Esophagus muscularis mucosa (tissue), 4 donors: ENCODE measurements at regions of chr7 and their contacts with region 1.

Region 1: DNA sequence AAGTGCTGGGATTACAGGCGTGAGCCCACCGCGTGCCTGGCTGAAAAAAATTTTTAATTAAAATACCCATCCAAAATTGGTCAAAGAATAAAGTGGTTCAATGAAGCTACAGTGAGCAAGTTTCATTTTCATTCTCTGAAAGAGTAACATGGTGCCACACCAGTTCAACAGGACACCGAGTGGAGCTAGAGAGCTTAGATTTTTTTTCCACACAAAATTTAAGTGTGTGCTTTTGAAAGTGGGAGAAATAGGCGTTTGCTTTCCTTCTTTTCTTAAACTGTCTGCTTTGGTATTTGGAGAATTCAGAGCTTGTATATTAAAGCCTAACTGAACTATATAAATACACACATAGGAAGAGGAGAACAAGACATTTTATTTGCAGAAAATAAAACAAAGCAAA is 43.4 kb downstream of the BPGM start:
- DNase-seq: no peak
- H3K4me3 ChIP-seq: peak overlapping the region; percentile 32 to 49 (median 42)
- H3K27ac ChIP-seq: peak overlapping the region; percentile 78 to 84 (median 82)
- H3K4me1 ChIP-seq: peaks cover 14 to 73% (median 51%) of the 10 kb centered on the region in 4 donors
- H3K27me3 ChIP-seq: no peaks in the 10 kb centered on the region
- CTCF ChIP-seq: peak; percentile 67 to 77 (median 72)
- EP300 ChIP-seq: no peak
- POLR2A ChIP-seq: no peak

Region 2: DNA sequence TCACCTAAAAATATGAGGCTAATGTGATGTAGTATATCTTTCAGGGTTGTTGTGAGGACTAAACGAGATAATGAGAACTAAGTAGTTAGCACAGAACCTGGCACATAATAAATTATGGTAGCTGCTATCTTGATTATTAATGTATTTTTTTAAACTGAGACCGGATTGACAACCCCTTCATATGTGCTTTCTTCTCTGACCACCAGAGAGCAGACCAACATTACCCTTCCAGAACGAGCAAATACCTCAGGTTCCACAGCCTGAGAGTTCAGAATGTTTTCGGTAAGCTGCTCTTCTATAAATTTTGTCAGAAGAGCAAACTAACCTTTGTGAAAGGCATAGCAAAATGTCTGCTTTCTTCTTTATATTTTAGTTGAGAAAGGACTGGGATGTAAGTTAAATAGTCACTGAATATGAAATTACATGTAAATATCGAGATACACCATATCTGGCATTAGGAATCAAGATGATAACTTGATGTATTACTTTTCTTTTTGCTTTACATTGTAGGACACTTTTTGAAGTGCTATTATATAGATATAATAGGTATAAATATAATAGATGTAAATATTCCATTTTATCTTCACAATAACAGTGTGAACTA is 57.0 kb before region 1 on chr7:
- intact Hi-C with region 1: no loop called
- DNase-seq: no peak
- H3K4me3 ChIP-seq: no peak overlapping the region
- H3K27ac ChIP-seq: no peak overlapping the region
- H3K4me1 ChIP-seq: peaks cover 0 to 3% (median 0%) of the 10 kb centered on the region in 4 donors
- H3K27me3 ChIP-seq: no peaks in the 10 kb centered on the region
- CTCF ChIP-seq: peak in 2 of 3 experiments; percentile 41 to 47
- EP300 ChIP-seq: no peak
- POLR2A ChIP-seq: no peak

Region 3: DNA sequence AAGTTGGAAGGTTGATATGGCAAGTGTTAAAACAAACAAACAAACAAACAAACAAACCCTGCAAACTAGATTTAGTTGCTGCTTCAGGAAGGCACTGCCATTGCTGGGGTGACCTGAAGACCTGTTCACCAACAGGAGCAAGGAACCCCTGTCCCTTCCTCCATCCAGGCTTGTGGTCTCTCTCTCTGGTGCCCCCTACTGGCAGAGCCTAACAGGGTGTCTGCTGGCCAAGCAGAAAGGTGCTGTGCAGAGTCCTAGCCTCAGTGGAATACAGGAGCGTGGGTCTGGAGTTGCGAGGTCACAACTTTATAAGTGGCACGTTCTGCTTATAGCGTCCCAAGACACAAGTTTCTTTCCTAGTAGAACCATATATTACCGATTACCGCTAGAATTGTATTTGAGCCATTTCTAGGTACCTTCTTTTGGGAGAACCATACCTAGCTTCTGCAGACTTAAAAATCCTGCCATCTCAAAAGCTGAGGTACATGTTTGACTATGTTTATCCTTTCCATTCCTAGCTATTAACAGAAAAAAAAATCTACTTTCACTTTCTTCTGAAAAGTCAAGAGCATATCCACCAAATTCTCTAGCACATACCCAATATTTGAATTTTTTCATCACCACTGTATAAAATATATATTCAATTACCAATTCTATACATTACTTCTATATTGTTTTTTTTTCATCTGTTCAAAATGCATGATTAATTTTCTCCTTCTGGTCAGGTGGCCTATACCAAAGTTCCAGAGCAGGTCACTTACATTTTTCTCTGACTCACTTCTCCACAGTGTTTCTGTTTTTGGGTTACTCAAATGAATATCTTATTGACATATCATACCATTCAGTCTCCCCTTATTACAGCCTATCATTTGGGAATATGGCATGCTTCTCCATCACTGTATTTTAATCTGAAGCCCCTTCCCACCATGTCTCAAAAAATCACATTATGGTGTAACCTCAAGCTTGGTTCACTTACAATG is 60.4 kb after region 1 on chr7:
- intact Hi-C with region 1: loop called (anchors 5 kb)
- DNase-seq: no peak
- H3K4me3 ChIP-seq: no peak overlapping the region
- H3K27ac ChIP-seq: no peak overlapping the region
- H3K4me1 ChIP-seq: peaks cover 2 to 48% (median 39%) of the 10 kb centered on the region in 4 donors
- H3K27me3 ChIP-seq: no peaks in the 10 kb centered on the region
- CTCF ChIP-seq: peak; percentile 49 to 66 (median 63)
- EP300 ChIP-seq: no peak
- POLR2A ChIP-seq: no peak

Region 4: DNA sequence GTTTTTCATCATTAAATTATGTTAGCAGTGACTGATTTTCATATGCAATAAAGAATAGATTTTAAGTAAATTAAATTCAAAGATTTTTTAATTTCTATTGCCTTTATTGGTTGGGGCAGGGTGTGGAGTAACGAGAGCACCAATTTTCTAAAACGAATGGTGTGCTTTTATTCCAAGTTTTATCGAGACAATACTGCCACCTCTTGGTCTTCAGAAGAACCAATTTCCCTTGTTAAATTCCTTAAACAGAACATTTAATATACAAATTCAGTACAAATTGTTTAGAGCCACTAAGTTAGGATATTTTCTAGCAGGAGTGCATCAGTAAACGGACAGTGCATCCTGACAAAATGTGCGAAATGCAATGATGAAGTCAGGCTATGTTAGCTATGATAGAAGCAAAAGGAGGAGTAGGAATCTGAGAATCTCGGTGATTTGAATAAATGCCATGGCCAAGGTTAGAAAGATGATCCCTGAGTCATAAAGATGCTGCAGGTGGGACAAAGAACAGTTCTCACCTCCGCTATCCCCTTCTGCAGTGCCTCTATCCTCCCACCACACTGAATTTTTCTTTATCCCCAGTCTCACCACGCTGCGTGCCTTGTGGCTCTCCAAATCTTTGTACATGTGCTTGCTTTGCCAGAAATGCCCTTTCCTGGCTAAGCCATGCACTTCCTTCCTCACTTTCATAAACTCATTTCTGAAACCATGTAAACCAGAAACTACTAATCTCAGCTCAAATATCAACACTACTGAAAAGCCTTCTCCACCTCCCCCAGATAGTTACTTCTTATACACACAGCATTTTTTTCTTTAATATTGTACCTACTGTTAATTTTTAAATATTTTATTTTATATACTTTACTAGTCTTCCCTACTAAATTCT is 264.4 kb after region 1 on chr7:
- intact Hi-C with region 1: loop called (anchors 2 kb)
- DNase-seq: no peak
- H3K4me3 ChIP-seq: no peak overlapping the region
- H3K27ac ChIP-seq: peak overlapping the region; percentile 35 to 89 (median 39)
- H3K4me1 ChIP-seq: peaks cover 0 to 30% (median 20%) of the 10 kb centered on the region in 4 donors
- H3K27me3 ChIP-seq: no peaks in the 10 kb centered on the region
- CTCF ChIP-seq: peak; percentile 52 to 57 (median 56)
- EP300 ChIP-seq: no peak
- POLR2A ChIP-seq: no peak

Region 5: DNA sequence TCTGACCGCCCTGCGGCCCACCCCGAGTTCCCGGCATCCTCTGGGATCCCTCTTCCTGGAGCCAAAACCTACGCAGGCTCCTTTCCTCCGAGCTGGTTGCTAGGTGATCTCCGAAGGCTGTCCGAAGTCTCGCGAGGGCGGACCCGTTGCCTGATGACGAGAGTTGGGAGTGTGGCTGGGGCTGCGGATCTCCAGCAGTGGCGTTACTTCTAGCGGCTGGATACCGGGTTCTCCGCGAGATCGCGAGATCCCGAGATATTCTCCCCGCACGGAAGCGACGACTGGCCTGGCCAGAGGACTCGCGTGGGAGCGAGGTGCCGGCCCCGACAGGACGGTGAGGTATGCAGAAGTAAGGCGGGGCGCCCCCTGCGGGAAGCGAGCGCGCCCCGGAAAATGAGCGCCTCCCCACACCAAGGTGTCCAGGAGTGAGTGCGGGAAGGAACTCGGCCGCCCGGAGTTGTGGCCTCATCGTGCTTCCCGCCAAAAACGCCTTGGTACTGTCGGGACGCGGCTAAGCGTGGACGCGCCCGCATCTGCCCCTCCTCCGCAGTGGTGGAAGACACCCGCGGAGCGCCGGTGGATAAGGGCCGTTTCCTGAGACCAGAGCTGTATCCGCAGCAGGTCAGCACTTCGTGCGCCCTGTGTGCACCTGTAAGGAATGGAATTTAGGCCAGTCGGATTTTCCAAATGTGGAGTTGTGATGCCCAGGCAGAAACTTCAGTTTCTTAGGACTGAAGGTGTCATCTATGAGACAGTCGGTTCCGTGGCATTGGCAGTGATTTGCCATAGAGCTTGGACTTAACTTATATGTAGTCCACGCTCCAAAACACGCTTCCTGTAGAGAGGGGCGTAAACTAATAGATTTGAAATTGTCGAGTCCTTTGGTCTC is 296.6 kb after region 1 on chr7 and contains the start of gene AGBL3:
- intact Hi-C with region 1: loop called (anchors 10 kb)
- DNase-seq: peak; percentile 99
- H3K4me3 ChIP-seq: peak within 1 kb of the TSS; percentile 70 to 81 (median 76)
- H3K27ac ChIP-seq: peak within 1 kb of the TSS; percentile 87 to 93 (median 88)
- H3K4me1 ChIP-seq: peaks cover 0 to 51% (median 33%) of the 10 kb centered on the region in 4 donors
- H3K27me3 ChIP-seq: no peaks in the 10 kb centered on the region
- CTCF ChIP-seq: peak; percentile 60 to 69 (median 62)
- EP300 ChIP-seq: peak; percentile 21
- POLR2A ChIP-seq: no peak
- total RNA-seq, gene AGBL3: 0.66 to 3.3 (median 1.7) TPM

Region 6: DNA sequence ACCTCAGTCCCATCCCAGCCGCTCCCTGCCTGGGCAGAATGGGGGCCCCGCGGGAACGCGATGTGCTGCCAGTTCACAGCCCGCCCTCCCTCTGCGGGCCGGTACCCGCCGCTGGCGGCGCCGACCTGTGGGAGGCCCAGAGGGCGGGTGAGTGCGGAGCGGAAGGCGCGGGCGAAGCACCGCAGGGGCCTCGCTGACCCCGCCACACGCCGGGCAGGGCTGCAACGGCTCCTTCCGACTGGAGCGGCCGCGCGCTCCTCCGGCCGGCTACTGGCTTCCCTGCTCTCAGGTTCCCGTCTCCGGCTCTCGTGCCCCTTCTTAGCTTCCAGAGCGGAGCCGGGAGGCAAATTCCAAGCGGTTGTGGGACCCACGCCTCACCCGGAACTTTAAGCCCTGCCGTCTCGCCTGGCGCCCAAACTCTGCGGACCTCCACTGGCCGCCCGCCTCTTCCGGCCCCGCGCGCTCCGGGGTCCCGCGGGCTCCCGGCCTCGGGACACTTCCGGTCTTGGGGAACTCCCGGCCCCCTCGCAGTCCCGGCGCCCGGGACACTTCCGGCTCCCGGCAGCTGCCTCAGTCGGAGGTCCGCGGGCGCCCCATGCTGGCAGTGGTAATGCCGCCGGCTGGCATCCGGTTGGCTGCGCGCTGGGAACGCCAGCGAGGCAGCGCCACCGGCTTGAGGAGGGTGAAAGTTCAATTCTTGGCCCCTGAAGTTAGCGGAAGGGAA is 480.4 kb after region 1 on chr7 and contains the start of gene CYREN:
- intact Hi-C with region 1: loop called (anchors 2 kb)
- DNase-seq: peak; percentile 96
- H3K4me3 ChIP-seq: peak within 1 kb of the TSS; percentile 82 to 88 (median 84)
- H3K27ac ChIP-seq: peak within 1 kb of the TSS; percentile 94 to 98 (median 96)
- H3K4me1 ChIP-seq: peaks cover 57 to 60% (median 60%) of the 10 kb centered on the region in 4 donors
- H3K27me3 ChIP-seq: peaks cover 0 to 4% (median 0%) of the 10 kb centered on the region in 4 donors
- CTCF ChIP-seq: peak; percentile 77 to 90 (median 89)
- EP300 ChIP-seq: no peak
- POLR2A ChIP-seq: peak; percentile 42
- total RNA-seq, gene CYREN: 30.8 to 51.7 (median 40.2) TPM

Region 7: GRCh38 chr7:135253898-135254771 is 564.1 kb after region 1 on chr7:
- intact Hi-C with region 1: loop called (anchors 10 kb)
- DNase-seq: no peak
- H3K4me3 ChIP-seq: peak overlapping the region in 1 of 4 donors; percentile 24
- H3K27ac ChIP-seq: peak overlapping the region; percentile 77 to 84 (median 83)
- H3K4me1 ChIP-seq: peaks cover 18 to 29% (median 25%) of the 10 kb centered on the region in 4 donors
- H3K27me3 ChIP-seq: no peaks in the 10 kb centered on the region
- CTCF ChIP-seq: no peak
- EP300 ChIP-seq: no peak
- POLR2A ChIP-seq: no peak